HEK293 (cell line): ENCODE measurements at regions of chr1 and their contacts with region 1.

Region 1: GRCh38 chr1:151340870-151341754 is 5.9 kb downstream of the RFX5 start:
- H3K4me3 ChIP-seq: no peak overlapping the region
- H3K27ac ChIP-seq: no peak overlapping the region
- H3K4me1 ChIP-seq: no peaks in the 10 kb centered on the region
- CTCF ChIP-seq: peak; percentile 65

Region 2: GRCh38 chr1:151198255-151199127 is 142.6 kb before region 1 on chr1 and contains the start of gene PIP5K1A:
- CTCF ChIA-PET with region 1: interaction called, 24 read pairs
- POLR2A ChIA-PET with region 1: interaction called, 3 read pairs
- H3K4me3 ChIP-seq: peak within 1 kb of the TSS; percentile 94
- H3K27ac ChIP-seq: peak within 1 kb of the TSS; percentile 80
- H3K4me1 ChIP-seq: peaks cover 8% of the 10 kb centered on the region
- CTCF ChIP-seq: no peak

Region 3: DNA sequence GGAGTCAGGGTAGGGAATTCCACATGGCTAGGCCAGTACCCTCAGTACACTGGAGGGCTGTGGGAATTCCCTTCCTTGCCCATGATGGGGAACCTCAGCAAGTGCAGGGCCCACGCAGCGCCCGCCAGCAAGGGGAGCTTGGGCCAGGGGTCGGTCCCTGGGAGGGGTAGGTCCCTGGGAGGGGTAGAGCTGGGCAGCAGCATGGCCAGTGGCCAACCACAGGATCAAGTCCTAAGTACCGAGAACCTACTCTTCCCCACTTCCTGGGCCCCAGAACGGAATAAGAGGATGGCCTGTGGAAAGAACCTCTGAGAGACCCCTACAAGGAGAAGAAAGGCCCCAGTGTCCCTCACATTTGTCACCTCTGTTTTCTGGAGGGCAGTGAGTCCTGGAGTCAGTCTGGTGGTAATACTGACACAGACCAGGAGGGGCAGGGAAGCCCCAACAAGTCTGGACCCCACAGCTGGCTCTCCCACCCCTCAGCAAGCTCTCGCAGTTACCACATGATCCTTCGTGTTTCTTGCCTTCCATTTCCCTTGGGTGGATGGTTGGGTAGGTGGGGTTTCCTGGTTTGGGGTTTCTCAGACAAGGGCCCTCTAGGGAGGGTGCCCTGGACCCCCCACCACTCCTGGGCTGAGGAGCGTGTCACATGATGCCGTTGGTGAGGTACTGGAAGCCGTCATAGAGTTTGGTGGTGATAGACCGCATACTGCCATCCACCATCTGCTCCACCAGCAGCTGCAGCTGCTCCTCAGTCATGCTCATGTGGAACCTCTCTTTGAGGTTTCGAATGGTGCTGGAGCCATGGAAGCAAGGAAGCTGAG is 48.7 kb before region 1 on chr1:
- CTCF ChIA-PET with region 1: interaction called, 190 read pairs
- POLR2A ChIA-PET with region 1: interaction called, 5 read pairs
- H3K4me3 ChIP-seq: no peak overlapping the region
- H3K27ac ChIP-seq: no peak overlapping the region
- H3K4me1 ChIP-seq: no peaks in the 10 kb centered on the region
- CTCF ChIP-seq: no peak

Region 4: DNA sequence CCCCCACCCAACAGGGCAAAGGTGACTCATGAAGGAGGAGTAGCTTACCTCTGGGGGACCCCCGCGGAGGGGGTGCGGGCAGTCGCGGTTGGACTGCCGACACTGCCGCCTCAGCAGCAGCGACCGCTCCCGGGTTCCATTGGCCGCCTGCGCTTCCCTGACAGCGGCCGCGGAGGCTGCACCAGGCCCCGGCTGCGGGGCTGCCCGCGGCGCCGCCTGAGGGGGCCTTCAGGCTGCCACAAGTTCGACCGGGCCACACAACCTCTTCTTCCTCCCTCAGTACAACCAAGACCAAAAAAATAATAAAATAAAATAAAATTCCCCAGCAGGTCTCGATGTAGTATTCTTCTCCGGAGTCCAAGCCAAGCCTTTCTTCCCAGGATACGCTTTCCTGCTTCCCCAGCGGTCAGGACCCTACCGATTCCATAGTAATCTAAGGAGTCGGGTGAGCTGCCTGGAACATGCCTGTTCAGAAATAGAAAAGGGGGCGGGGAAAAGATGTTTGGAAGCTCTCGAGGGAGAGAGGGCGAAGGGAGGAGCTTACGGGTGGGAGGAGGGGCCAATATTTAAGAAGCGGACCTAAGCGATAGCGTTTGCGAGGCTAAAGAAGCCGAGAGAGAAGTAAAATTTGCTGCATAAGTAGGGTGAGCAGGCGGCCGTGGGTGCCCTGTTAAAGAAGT is 13.7 kb before region 1 on chr1 and contains the start of gene PI4KB:
- CTCF ChIA-PET with region 1: interaction called, 63 read pairs
- POLR2A ChIA-PET with region 1: interaction called, 23 read pairs
- H3K4me3 ChIP-seq: peak within 1 kb of the TSS; percentile 83
- H3K27ac ChIP-seq: peak within 1 kb of the TSS; percentile 85
- H3K4me1 ChIP-seq: peaks cover 3% of the 10 kb centered on the region; the same call in 1 of the 2 replicates
- CTCF ChIP-seq: no peak

Region 5: GRCh38 chr1:151372061-151372934 is 31.2 kb after region 1 on chr1 and contains the start of gene SELENBP1:
- CTCF ChIA-PET with region 1: interaction called, 11 read pairs
- POLR2A ChIA-PET with region 1: interaction called, 3 read pairs
- H3K4me3 ChIP-seq: no peak within 1 kb of the TSS
- H3K27ac ChIP-seq: peak within 1 kb of the TSS; percentile 64
- H3K4me1 ChIP-seq: peaks cover 12% of the 10 kb centered on the region
- CTCF ChIP-seq: no peak; the same call in 1 of the 2 replicates

Region 6: GRCh38 chr1:151819976-151820623 is 479.0 kb after region 1 on chr1:
- CTCF ChIA-PET with region 1: no interaction called
- POLR2A ChIA-PET with region 1: no interaction called
- H3K4me3 ChIP-seq: no peak overlapping the region
- H3K27ac ChIP-seq: no peak overlapping the region
- H3K4me1 ChIP-seq: no peaks in the 10 kb centered on the region
- CTCF ChIP-seq: no peak